ENCODE measurements at regions of chr9 and their contacts with region 1.

Region 1: DNA sequence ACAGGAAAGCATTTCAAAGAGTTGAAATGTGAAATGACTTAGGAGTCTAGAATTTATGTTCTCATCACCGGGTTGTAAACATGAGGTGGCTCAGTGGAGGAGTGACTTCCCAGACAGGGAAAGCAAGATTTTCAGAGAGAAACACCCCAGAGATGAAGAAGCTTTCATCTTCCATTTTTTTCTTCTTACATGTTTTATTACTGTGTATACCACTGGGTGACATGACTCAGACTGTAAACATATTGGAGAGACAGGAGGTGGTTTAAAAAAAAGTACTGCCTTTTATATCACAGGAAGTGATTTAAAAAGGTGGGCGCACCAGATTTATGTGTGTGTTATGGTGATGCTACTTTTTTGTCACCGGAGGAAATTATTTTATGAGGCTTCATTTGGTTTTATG is 209.1 kb upstream of the TUT7 start:
- DNase-seq: no peak
- ATAC-seq: no peak
- H3K4me3 ChIP-seq: no peak overlapping the region
- H3K27ac ChIP-seq: no peak overlapping the region
- H3K4me1 ChIP-seq: no peaks in the 10 kb centered on the region
- H3K27me3 ChIP-seq: no peaks in the 10 kb centered on the region

Region 2: DNA sequence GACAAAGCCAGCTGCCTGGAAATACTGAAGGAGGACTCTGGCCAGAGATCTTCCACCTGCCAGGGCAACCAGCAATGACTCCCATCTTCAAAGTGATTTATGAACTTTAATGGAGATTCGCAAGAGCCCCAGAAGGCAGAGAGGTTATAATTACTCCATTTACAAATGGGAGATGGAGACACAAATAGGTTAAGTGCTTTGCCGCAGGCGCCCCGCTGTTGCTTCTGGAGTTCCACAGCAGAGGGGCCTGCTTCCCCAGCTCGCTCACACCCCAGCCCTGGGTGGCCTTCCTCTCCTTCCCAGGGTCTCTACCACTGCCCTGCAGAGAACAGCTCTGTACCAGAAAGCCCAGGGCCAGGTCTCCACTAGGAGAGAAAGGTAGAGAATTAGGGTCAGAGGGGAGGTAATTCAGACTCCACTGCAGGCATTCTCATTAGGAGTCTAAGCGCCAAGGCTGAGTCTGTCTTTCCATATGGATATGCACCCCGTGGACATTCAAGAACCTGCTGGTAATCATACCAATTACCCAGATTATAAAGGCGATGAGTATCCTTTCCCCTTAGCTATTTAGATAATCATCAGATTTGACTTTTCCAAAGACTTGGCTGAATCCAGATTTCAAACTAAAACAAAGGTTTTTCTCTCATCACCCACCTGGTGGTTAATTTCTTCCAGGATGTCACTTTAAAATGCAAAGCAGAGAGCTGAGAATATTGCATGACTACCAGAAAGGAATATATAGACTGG is 51.6 kb before region 1 on chr9:
- intact Hi-C with region 1: loop called in 1 of 4 experiments (anchors 10 kb)
- DNase-seq: no peak
- ATAC-seq: no peak
- H3K4me3 ChIP-seq: no peak overlapping the region
- H3K27ac ChIP-seq: no peak overlapping the region
- H3K4me1 ChIP-seq: no peaks in the 10 kb centered on the region
- H3K27me3 ChIP-seq: no peaks in the 10 kb centered on the region

Region 3: DNA sequence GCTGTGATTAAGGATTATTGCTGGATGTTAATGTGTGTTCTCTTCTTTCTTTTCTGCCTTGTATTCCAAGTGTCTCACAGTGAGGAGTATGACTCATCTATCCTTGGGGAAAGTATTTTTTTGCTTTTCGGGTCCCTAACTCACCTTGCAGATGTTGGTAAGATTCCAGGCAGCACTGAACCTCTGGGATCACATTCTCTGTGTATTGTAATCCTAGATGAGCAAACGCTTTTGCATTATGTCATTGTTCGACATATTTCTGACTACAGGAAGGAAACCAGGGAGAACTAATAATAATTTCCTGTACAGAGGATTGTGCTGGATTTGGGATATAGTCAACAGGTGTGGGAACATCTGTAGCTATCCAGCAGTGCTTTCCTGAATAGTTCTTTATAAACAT is 36.9 kb after region 1 on chr9:
- intact Hi-C with region 1: no loop called
- DNase-seq: no peak
- ATAC-seq: no peak
- H3K4me3 ChIP-seq: no peak overlapping the region
- H3K27ac ChIP-seq: no peak overlapping the region
- H3K4me1 ChIP-seq: no peaks in the 10 kb centered on the region
- H3K27me3 ChIP-seq: no peaks in the 10 kb centered on the region

Measured in right cardiac atrium (tissue), 5 donors.